ENCODE measurements at regions of chr2 and their contacts with region 1.

Region 1: GRCh38 chr2:161077367-161078210 is 82.6 kb upstream of the TANK start:
- DNase-seq: peak; percentile 95
- H3K4me3 Mint-ChIP-seq: peak overlapping the region; percentile 40
- H3K27ac Mint-ChIP-seq: peak overlapping the region; percentile 90
- H3K4me1 Mint-ChIP-seq: peaks cover 50% of the 10 kb centered on the region
- H3K27me3 Mint-ChIP-seq: no peaks in the 10 kb centered on the region

Region 2: DNA sequence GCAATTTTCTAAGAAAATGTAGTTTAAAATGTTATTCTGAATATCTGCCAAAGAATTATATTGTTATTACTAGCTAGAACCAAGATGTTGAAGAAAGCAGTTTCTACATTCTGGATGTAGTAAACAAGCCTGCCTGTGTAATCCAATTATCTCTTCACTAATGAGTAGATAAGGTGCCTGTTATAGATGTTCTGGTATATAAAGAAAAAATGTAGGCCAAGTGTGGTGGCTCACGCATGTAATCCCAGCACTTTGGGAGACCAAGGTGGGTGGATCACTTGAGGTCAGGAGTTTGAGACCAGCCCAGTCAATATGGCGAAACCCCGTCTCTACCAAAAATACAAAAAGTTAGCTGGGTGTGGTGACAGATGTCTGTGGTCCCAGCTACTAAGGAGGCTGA is 1308.4 kb before region 1 on chr2:
- intact Hi-C with region 1: no loop called
- DNase-seq: no peak
- H3K4me3 Mint-ChIP-seq: no peak overlapping the region
- H3K27ac Mint-ChIP-seq: no peak overlapping the region
- H3K4me1 Mint-ChIP-seq: peaks cover 2% of the 10 kb centered on the region
- H3K27me3 Mint-ChIP-seq: no peaks in the 10 kb centered on the region

Region 3: DNA sequence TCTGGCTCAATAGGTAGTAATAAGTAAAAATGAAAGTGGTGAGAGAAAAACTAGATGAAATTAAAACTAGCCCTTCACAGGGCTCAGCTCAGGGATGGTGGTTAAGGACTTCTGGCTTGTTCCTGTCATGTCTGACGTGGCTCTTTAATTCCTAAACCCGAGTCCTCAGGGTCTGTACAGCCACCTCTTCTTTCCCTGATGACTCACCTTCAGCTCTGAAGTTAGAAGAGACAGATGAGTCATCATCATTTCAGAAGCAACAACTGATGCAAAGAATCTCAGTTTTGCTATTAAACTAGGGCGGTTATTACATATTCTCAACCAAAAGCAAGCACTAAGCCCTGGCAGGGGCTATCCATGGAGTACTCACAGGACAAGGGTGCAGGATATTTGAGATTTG is 853.5 kb before region 1 on chr2:
- intact Hi-C with region 1: loop called (anchors 1 kb)
- DNase-seq: peak; percentile 73
- H3K4me3 Mint-ChIP-seq: peak overlapping the region; percentile 31
- H3K27ac Mint-ChIP-seq: peak overlapping the region; percentile 67
- H3K4me1 Mint-ChIP-seq: peaks cover 44% of the 10 kb centered on the region
- H3K27me3 Mint-ChIP-seq: peaks cover 4% of the 10 kb centered on the region

Region 4: DNA sequence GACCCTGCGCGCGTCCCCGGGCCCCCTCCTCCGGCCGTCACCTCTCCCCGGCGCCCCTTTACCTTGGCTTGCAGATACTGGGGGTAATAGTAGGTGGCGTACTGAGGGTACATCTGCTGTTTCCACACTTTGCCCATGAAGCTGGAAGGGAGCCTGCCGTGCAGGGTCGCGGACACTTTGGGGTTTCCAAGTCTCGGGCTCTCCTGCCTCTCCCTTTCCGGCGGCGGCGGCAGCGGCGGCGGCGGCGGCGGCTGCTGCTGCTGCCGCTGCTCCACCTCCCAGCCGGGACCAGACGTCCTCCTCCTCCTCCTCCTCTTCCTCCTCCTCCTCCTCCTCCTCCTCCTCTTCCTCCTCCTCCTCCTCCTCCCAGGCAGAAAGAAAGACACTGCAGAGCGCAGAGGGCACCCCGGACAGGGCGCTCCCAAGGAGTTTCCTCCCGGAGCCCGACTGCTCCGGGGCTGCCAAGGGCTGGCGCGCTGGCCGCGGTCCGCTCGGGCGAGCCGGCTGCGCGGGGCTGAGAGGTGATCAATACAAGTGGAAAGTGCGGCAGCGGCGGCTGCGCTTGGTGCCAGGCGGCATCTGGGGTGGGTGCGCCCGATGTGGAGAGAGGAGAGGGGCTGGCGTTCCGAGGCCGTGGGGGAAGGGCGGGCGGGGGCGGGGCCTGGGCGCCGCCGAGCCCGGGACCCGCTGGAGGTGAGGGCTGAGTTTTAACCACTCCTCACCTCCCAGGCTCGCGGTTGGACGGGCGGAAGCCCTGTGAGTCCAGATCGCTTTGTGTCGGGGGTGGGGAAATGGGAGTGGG is 584.2 kb before region 1 on chr2 and contains the start of gene RBMS1:
- intact Hi-C with region 1: loop called (anchors 1 kb)
- DNase-seq: peak; percentile 87
- H3K4me3 Mint-ChIP-seq: peak within 1 kb of the TSS; percentile 94
- H3K27ac Mint-ChIP-seq: peak within 1 kb of the TSS; percentile 90
- H3K4me1 Mint-ChIP-seq: peaks cover 30% of the 10 kb centered on the region
- H3K27me3 Mint-ChIP-seq: peaks cover 11% of the 10 kb centered on the region
- total RNA-seq, gene RBMS1: 34.0 and 35.2 TPM in 2 replicates

Region 5: GRCh38 chr2:160574468-160575142 is 503.0 kb before region 1 on chr2:
- intact Hi-C with region 1: no loop called
- DNase-seq: no peak
- H3K4me3 Mint-ChIP-seq: no peak overlapping the region
- H3K27ac Mint-ChIP-seq: no peak overlapping the region
- H3K4me1 Mint-ChIP-seq: no peaks in the 10 kb centered on the region
- H3K27me3 Mint-ChIP-seq: no peaks in the 10 kb centered on the region

Region 6: GRCh38 chr2:161104054-161104553 is 26.5 kb after region 1 on chr2:
- intact Hi-C with region 1: loop called (anchors 1 kb)
- DNase-seq: peak; percentile 54
- H3K4me3 Mint-ChIP-seq: peak overlapping the region; percentile 31
- H3K27ac Mint-ChIP-seq: peak overlapping the region; percentile 38
- H3K4me1 Mint-ChIP-seq: peaks cover 14% of the 10 kb centered on the region
- H3K27me3 Mint-ChIP-seq: no peaks in the 10 kb centered on the region

Region 7: DNA sequence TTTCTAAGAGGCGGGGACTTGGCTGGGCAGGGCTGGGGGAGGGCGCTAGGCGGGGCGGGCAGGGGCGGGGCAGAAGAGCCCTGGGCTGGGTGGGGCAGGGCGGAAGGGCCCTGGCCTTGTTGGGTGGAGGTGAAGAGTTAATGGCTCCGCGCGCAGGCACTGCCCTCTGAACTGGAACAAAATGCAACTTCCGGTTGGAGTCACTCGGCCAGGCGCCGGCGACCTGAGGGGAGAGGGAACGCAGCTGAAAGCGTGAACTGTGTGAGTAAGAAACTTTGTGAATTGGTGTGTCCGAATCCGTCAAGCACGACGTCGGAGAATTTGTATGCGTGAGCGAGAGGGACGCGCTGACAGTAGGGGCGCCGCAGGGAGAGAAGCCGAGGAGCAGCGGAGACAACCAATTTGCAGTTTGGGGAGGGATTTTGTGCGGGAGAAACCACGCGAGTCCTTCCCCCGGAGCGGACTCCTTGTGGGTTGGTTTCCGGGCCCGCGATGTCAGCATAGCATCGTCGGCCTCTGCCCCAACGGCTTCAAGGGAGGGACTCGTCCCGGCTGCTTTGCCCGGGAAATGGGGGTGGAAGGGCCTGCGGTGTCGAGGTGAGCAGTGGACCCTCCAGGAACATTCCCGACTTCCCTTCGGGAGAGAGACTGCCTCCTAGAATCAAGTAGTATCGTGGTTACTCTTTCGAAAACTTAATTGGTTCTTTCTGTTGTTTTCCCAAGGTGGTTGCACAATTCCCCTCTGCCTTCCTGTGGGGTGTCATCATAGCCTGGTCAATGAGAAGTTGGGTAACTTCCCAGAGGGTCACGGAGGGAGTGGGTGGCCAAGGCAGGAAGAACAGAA is 82.9 kb after region 1 on chr2 and contains the start of gene TANK:
- intact Hi-C with region 1: loop called (anchors 1 kb)
- DNase-seq: peak; percentile 96
- H3K4me3 Mint-ChIP-seq: peak within 1 kb of the TSS; percentile 97
- H3K27ac Mint-ChIP-seq: peak within 1 kb of the TSS; percentile 98
- H3K4me1 Mint-ChIP-seq: peaks cover 55% of the 10 kb centered on the region
- H3K27me3 Mint-ChIP-seq: no peaks in the 10 kb centered on the region
- total RNA-seq, gene TANK: 91.2 and 97.2 TPM in 2 replicates

Region 8: GRCh38 chr2:161182651-161183050 is 105.1 kb after region 1 on chr2:
- intact Hi-C with region 1: no loop called
- DNase-seq: no peak
- H3K4me3 Mint-ChIP-seq: no peak overlapping the region
- H3K27ac Mint-ChIP-seq: no peak overlapping the region
- H3K4me1 Mint-ChIP-seq: peaks cover 21% of the 10 kb centered on the region
- H3K27me3 Mint-ChIP-seq: no peaks in the 10 kb centered on the region

Region 9: DNA sequence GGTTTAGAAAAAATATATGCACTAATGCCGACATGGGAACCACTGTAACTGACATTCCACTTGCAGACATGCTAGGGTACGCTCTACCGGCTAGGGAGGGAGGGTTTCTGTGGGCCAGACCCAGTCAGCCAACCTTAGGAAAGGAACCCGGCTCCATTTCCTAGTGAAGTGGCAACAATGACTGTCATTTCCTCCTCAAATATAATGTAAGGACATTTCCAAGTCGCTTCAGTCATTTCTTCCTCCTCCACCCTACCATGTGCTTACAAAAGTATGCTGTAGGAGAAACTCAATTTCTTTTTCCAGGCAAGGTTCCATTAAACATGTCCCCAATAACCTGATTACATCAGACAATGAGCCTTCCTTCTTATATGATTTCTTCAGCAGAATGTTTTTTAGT is 166.3 kb after region 1 on chr2:
- intact Hi-C with region 1: loop called (anchors 1 kb)
- DNase-seq: peak; percentile 70
- H3K4me3 Mint-ChIP-seq: peak overlapping the region; percentile 94
- H3K27ac Mint-ChIP-seq: peak overlapping the region; percentile 97
- H3K4me1 Mint-ChIP-seq: peaks cover 43% of the 10 kb centered on the region
- H3K27me3 Mint-ChIP-seq: no peaks in the 10 kb centered on the region

Region 10: DNA sequence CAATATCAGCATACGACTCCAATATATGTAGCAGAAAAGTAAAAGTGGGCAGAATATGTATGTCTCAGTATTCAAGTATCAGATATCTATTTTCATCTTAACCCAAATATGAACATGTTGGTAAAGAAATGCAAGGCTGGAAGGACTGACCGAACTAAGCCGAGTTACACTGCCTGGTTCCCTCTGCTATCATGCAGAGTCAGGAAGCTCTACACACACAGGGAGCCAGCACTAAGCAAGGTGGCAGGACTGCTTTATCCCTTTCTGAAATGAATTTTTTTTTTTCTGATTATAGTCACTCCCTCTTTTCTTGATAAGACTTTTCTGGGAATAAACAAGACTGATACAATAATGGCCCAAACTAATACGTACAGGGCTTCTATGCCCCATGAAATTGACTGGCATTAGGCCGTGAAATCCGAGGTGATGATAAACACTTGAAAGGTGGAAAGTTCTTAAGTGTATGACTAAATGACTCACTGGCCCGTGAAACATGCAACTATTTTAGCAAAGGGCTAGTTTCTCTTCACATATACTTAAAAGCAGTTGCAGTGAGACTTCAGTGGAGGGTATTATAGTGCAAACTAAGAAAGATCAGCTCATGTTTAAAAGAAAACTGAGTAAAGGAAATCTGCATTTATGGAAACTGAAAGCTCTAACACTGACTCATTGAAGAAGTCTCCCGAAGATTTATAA is 981.5 kb after region 1 on chr2:
- intact Hi-C with region 1: loop called (anchors 2 kb)
- DNase-seq: peak; percentile 79
- H3K4me3 Mint-ChIP-seq: peak overlapping the region; percentile 79
- H3K27ac Mint-ChIP-seq: peak overlapping the region; percentile 95
- H3K4me1 Mint-ChIP-seq: peaks cover 81% of the 10 kb centered on the region
- H3K27me3 Mint-ChIP-seq: no peaks in the 10 kb centered on the region